A673 (cell line): ENCODE measurements at regions of chr7 and their contacts with region 1.

Region 1: GRCh38 chr7:134916171-134916883 is 70.0 kb upstream of the AGBL3 start:
- DNase-seq: peak; percentile 89
- H3K4me3 ChIP-seq: peak overlapping the region; percentile 13
- H3K27ac ChIP-seq: peak overlapping the region; percentile 61
- H3K4me1 ChIP-seq: peaks cover 33% of the 10 kb centered on the region
- H3K27me3 ChIP-seq: no peaks in the 10 kb centered on the region
- CTCF ChIP-seq: no peak

Region 2: GRCh38 chr7:134850066-134850465 is 66.3 kb before region 1 on chr7:
- CTCF ChIA-PET with region 1: no interaction called
- POLR2A ChIA-PET with region 1: no interaction called
- intact Hi-C with region 1: loop called (anchors 1 kb)
- DNase-seq: peak; percentile 96
- H3K4me3 ChIP-seq: no peak overlapping the region
- H3K27ac ChIP-seq: peak overlapping the region; percentile 8
- H3K4me1 ChIP-seq: peaks cover 59% of the 10 kb centered on the region
- H3K27me3 ChIP-seq: peaks cover 3% of the 10 kb centered on the region
- CTCF ChIP-seq: no peak